ENCODE measurements at regions of chr7 and their contacts with region 1.

Region 1: GRCh38 chr7:44606450-44607254 is at the start of gene OGDH:
- DNase-seq: peak; percentile 100
- H3K4me3 ChIP-seq: peak within 1 kb of the TSS; percentile 62 to 87
- H3K27ac ChIP-seq: peak within 1 kb of the TSS; percentile 76 to 89
- H3K4me1 ChIP-seq: peaks cover 0 to 5% of the 10 kb centered on the region in 2 experiments; a peak in 2 of 4 replicates
- H3K27me3 ChIP-seq: no peaks in the 10 kb centered on the region
- CTCF ChIP-seq: no peak
- EP300 ChIP-seq: 0 out of 4 replicates have a peak, but pooled peaks of 1 of the 2 experiments have one; percentile 8
- RAD21 ChIP-seq: no peak
- polyA plus RNA-seq, gene OGDH: 58.2 and 69.4 TPM in 2 replicates

Region 2: GRCh38 chr7:44581879-44582603 is 24.6 kb before region 1 on chr7 and contains the start of gene TMED4:
- CTCF ChIA-PET with region 1: interaction called, 7 read pairs
- POLR2A ChIA-PET with region 1: interaction called, 24 read pairs
- DNase-seq: peak; percentile 100
- H3K4me3 ChIP-seq: peak within 1 kb of the TSS; percentile 82 to 95
- H3K27ac ChIP-seq: peak within 1 kb of the TSS; percentile 90 to 94
- H3K4me1 ChIP-seq: peaks cover 5 to 15% of the 10 kb centered on the region in 2 experiments; a peak in 2 of 4 replicates
- H3K27me3 ChIP-seq: no peaks in the 10 kb centered on the region
- CTCF ChIP-seq: no peak
- EP300 ChIP-seq: no peak
- RAD21 ChIP-seq: no peak
- polyA plus RNA-seq, gene TMED4: 145 and 192 TPM in 2 replicates

Region 3: DNA sequence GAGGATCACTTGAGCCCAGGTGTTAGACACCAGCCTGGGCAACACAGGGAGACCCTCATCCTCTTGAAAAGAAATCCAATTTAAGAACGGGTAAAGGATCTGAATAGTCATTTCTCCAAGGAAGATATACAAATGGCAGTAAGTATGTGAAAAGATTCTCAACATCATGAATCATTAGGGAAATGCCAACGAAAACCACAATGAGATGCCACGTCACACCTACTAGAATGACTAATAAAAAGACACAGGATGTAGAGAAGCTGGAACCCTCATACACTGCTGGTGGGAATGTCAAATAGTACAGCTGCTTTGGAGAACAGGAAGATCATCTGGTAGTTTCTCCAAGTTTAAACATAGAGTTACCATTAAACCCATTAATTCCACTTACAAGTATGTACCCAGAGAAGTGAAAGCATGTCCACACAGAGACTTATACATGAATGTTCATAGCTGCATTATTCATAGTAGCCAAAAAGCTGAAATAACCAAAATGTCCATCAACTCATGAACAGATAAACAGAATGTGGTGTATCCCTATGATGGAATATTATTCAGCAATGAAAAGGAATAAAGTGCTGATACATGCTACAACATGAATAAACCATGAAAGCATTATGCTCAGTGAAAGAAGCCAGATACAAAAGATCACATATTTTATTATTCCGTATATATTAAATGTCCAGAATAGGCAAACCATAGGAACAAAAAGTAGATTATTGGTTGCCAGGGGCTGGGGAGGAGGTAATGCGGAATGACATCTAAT is 128.9 kb after region 1 on chr7:
- CTCF ChIA-PET with region 1: no interaction called
- POLR2A ChIA-PET with region 1: no interaction called
- DNase-seq: no peak
- H3K4me3 ChIP-seq: peak overlapping the region in 1 of 2 experiments; percentile 29; a peak in 1 of 4 replicates
- H3K27ac ChIP-seq: peak overlapping the region in 1 of 2 experiments; percentile 99; a peak in 2 of 4 replicates
- H3K4me1 ChIP-seq: peaks cover 0 to 15% of the 10 kb centered on the region in 2 experiments; a peak in 3 of 4 replicates
- H3K27me3 ChIP-seq: no peaks in the 10 kb centered on the region
- CTCF ChIP-seq: peak; percentile 32
- EP300 ChIP-seq: peak in 1 of 2 experiments; percentile 89; a peak in 2 of 4 replicates
- RAD21 ChIP-seq: no peak

Measured in SK-N-SH (cell line).